ENCODE measurements at regions of chr3 and their contacts with region 1.

Region 1: DNA sequence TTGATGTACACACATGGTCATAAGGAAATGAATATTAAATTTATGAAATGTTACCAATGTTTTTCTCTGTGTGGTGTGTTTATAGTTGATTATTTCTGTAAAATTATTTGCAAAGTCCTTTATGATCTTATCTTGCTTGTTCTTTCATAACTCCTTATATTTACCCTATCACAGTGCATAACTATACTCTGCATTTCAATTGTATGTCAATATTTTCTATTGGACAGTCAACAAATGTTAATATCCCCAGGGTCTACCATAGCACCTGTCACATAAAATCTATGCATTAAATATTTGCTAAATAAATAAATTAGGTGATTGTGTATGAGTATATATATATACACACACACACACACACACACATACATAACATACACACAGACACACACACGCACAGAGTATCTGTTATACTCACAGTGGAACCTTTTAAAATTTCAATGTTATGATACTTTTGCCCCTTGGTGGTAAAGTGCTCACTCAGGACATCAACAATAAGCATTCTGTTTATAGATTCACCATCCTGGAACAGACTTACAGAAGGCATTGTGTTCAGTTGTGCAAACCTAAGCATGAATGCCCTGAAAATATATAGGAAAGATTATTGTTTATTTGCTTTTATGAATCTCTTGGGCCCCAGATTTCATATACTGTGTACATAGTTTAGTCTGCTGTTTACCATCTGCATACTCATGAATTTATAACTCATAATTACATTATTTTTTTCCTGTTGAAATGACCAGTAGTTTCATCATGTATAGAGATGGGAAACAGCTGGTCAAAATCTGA is 443.7 kb downstream of the EPHA6 start:
- DNase-seq: no peak
- H3K4me3 ChIP-seq: no peak overlapping the region
- H3K4me3 Mint-ChIP-seq: no peak overlapping the region
- H3K27ac Mint-ChIP-seq: no peak overlapping the region
- H3K4me1 ChIP-seq: no peaks in the 10 kb centered on the region
- H3K4me1 Mint-ChIP-seq: peaks cover 6% of the 10 kb centered on the region
- H3K27me3 ChIP-seq: no peaks in the 10 kb centered on the region
- H3K27me3 Mint-ChIP-seq: no peaks in the 10 kb centered on the region
- CTCF ChIP-seq: no peak

Region 2: DNA sequence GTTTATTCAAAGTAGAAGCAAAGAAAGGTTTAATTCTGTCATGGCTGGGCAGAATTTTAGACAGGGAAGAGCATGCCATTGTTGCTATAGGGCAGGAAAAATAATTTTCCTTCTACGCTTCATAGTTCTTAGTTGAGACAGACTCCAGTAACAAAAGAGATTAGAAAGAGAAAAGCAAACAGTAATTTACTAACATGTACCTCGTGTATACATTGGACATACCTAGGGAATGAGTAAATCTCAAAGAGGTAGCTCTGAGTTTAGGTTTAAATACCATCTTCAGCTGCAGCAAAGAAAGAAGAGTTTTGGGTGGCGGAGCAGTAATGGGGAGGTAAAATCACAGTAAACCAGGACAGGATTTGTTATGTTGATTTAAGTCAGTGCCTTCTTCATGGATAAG is 27.6 kb before region 1 on chr3:
- CTCF ChIA-PET with region 1: no interaction called
- POLR2A ChIA-PET with region 1: no interaction called
- intact Hi-C with region 1: loop called (anchors 2 kb)
- DNase-seq: peak in 1 of 2 experiments; percentile 10
- H3K4me3 ChIP-seq: no peak overlapping the region
- H3K4me3 Mint-ChIP-seq: no peak overlapping the region
- H3K27ac Mint-ChIP-seq: peak overlapping the region; percentile 74
- H3K4me1 ChIP-seq: peaks cover 46% of the 10 kb centered on the region
- H3K4me1 Mint-ChIP-seq: peaks cover 40% of the 10 kb centered on the region
- H3K27me3 ChIP-seq: no peaks in the 10 kb centered on the region
- H3K27me3 Mint-ChIP-seq: no peaks in the 10 kb centered on the region
- CTCF ChIP-seq: no peak

Region 3: GRCh38 chr3:97291901-97292300 is 33.8 kb after region 1 on chr3:
- CTCF ChIA-PET with region 1: no interaction called
- POLR2A ChIA-PET with region 1: no interaction called
- intact Hi-C with region 1: no loop called
- DNase-seq: no peak
- H3K4me3 ChIP-seq: no peak overlapping the region
- H3K4me3 Mint-ChIP-seq: no peak overlapping the region
- H3K27ac Mint-ChIP-seq: no peak overlapping the region
- H3K4me1 ChIP-seq: no peaks in the 10 kb centered on the region
- H3K4me1 Mint-ChIP-seq: no peaks in the 10 kb centered on the region
- H3K27me3 ChIP-seq: no peaks in the 10 kb centered on the region
- H3K27me3 Mint-ChIP-seq: no peaks in the 10 kb centered on the region
- CTCF ChIP-seq: no peak

Measured in Caco-2 (cell line).